A549 (cell line): ENCODE measurements at regions of chr6 and their contacts with region 1.

Region 1: DNA sequence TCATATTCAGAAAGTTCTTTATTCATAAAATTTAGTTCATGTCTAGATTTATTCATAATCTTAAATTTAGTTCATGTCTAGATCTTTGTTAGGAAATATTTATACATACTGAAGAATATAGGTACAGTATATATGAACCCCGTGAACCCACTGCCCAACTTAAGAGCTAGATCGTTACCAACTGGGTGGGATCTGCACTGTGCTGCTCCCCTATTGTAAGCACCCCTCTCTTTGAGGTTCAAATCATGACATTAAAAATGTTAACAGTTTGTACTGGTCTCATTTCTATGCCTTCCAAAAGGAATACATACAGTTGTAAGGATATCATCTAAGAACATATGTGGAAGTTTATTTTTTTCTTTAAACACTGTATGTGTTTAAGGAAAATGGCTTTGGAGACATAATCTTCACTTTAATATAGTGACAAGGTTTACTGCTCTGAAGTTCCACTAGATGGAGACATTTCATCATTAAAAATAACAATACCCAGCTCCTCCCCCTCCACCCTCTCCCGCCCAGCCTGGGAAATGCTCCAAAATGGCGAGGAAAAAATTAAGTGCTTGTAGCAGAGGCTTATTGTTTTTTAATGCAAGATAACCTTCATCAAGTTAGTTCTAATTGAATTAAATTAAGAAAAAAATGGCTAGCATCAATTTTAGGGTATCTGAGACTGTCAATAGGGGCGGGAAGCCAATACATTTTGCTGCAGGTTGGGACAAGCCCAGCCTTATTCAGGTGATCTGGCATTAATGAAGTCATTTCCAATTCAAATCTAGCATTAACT is 104.1 kb upstream of the TRAF3IP2 start:
- DNase-seq: peak; percentile 48 to 77
- ATAC-seq: peak; percentile 84 to 96
- H3K4me3 ChIP-seq: peak overlapping the region; percentile 24; the same call in 2 of the 3 replicates
- H3K27ac ChIP-seq: peak overlapping the region; percentile 47 to 70; a peak in 3 of 6 replicates
- H3K4me1 ChIP-seq: peaks cover 2% of the 10 kb centered on the region; the same call in 1 of the 3 replicates
- CTCF ChIP-seq: peak; percentile 68
- EP300 ChIP-seq: no peak
- POLR2A ChIP-seq: no peak
- RAD21 ChIP-seq: peak; percentile 75 to 83

Region 2: DNA sequence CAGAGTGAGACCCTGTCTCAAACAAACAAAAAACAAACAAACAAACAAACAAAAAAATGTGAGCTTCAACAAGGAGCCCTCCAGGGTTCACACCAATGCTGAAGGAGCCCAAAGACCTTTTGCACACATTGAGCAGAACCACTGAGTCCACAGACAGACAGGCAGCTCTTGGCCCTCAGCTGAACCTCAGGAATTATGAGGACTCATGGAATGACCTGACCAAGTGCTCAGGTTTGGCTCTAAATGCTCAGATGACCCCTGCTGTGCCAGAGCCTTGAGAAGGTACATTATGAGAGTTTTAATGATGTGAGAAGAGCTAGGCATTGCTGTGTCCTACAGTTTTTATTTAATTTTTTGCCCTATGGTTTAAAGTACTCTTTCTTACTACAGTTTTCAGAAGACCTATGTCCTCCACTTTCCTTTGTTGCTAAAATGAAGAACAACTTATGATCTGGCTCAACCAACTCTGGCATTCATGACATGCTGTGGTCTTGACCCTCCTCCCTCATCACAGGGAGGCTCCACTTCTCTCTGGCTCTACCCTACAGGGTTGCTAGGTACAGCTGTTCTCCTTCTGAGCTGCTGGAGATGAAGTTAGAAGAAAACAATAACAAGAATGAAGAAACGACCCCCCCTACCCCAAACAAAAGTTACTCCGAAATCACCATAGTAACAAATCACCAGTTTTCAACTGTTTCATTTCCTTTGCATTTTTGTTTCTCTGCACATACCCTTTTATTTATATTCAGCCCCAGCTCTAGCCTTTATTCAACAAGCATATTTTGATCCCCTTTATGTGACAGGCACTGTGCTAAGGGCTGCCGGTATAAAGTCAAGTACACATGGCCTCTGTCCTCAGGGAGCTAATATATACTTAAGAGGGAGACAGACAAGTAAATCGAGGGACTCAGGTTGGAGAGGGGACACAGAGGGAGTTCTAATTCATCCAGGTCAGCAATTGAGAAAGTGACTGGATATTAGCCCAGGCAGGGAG is 24.6 kb after region 1 on chr6:
- CTCF ChIA-PET with region 1: interaction called, 10 read pairs
- POLR2A ChIA-PET with region 1: no interaction called
- DNase-seq: no peak
- ATAC-seq: no peak
- H3K4me3 ChIP-seq: no peak overlapping the region
- H3K27ac ChIP-seq: no peak overlapping the region
- H3K4me1 ChIP-seq: no peaks in the 10 kb centered on the region
- CTCF ChIP-seq: no peak
- EP300 ChIP-seq: no peak
- POLR2A ChIP-seq: no peak
- RAD21 ChIP-seq: no peak

Region 3: GRCh38 chr6:111997078-111997852 is 287.5 kb after region 1 on chr6:
- CTCF ChIA-PET with region 1: interaction called, 14 read pairs
- POLR2A ChIA-PET with region 1: no interaction called
- DNase-seq: peak; percentile 38 to 65
- ATAC-seq: peak; percentile 90 to 95
- H3K4me3 ChIP-seq: no peak overlapping the region
- H3K27ac ChIP-seq: no peak overlapping the region
- H3K4me1 ChIP-seq: no peaks in the 10 kb centered on the region
- CTCF ChIP-seq: peak; percentile 72
- EP300 ChIP-seq: no peak
- POLR2A ChIP-seq: no peak
- RAD21 ChIP-seq: peak; percentile 79 to 81

Region 4: GRCh38 chr6:112043032-112044007 is 333.5 kb after region 1 on chr6:
- CTCF ChIA-PET with region 1: interaction called, 16 read pairs
- POLR2A ChIA-PET with region 1: no interaction called
- DNase-seq: peak; percentile 68 to 86
- ATAC-seq: peak; percentile 98 to 99
- H3K4me3 ChIP-seq: peak overlapping the region; percentile 70
- H3K27ac ChIP-seq: peak overlapping the region; percentile 80 to 85
- H3K4me1 ChIP-seq: peaks cover under 1% of the 10 kb centered on the region; the same call in 1 of the 3 replicates
- CTCF ChIP-seq: peak; percentile 71
- EP300 ChIP-seq: no peak
- POLR2A ChIP-seq: 0 out of 2 replicates have a peak, but pooled peaks have one; percentile 19
- RAD21 ChIP-seq: peak; percentile 83 to 87

Region 5: DNA sequence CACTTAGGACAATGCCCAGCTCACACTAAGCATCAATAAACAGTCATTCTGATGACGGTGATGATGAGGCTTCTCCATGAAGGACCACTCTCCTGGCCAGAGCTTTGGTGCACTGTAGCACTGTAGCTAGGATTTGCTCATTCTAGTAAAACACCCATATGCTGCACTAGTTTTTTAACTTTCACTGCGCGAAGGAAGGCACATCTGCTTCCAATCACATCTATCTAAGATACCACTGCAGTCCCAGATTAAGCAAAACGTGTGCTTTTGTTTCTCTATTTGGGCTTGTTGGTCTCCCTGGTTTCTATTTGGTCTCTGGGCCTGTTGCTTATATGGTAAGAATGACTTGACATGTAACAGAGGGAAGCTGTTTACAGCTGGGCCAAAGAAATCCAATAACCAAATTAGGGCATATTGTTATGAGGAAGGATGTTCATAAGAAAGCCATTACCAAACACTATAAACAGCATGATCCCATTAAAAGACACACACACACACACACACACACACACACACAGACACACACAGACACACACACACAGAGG is 440.0 kb after region 1 on chr6:
- CTCF ChIA-PET with region 1: no interaction called
- POLR2A ChIA-PET with region 1: no interaction called
- DNase-seq: no peak
- ATAC-seq: no peak
- H3K4me3 ChIP-seq: no peak overlapping the region
- H3K27ac ChIP-seq: no peak overlapping the region
- H3K4me1 ChIP-seq: peaks cover 8% of the 10 kb centered on the region; the same call in 1 of the 3 replicates
- CTCF ChIP-seq: no peak
- EP300 ChIP-seq: no peak
- POLR2A ChIP-seq: no peak
- RAD21 ChIP-seq: no peak